Mammary epithelial cell (primary cell): ENCODE measurements at regions of chr14 and their contacts with region 1.

Region 1: GRCh38 chr14:54698966-54699530 is 132.1 kb downstream of the SAMD4A start:
- DNase-seq: no peak
- H3K4me3 ChIP-seq: no peak overlapping the region
- H3K27ac ChIP-seq: no peak overlapping the region
- H3K4me1 ChIP-seq: peaks cover 30% of the 10 kb centered on the region
- H3K27me3 ChIP-seq: no peaks in the 10 kb centered on the region
- CTCF ChIP-seq: no peak

Region 2: GRCh38 chr14:54411371-54411770 is 287.7 kb before region 1 on chr14:
- CTCF ChIA-PET with region 1: no interaction called
- dilution Hi-C with region 1: no loop called
- in situ Hi-C with region 1: no loop called
- intact Hi-C with region 1: no loop called
- DNase-seq: no peak
- H3K4me3 ChIP-seq: no peak overlapping the region
- H3K27ac ChIP-seq: no peak overlapping the region
- H3K4me1 ChIP-seq: no peaks in the 10 kb centered on the region
- H3K27me3 ChIP-seq: no peaks in the 10 kb centered on the region
- CTCF ChIP-seq: no peak

Region 3: DNA sequence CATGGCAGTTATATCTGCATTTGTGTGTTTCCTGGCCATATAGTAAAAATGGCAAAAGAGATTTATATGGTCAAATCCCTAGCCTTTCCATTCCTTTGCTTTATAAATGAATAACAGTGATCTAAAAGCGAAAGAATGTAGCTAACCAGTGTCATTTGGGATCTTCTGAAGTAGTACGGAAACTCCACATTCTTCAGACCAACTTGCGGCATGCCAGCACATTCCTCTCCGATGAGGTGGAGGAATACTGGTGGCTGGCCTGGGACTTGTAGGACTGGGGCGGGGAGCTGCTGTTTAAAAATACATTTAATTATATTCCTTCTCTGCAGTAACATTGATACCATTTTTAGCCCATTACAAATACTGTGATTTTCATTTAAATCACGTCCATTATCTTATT is 46.9 kb before region 1 on chr14:
- CTCF ChIA-PET with region 1: interaction called, 10 read pairs
- dilution Hi-C with region 1: no loop called
- in situ Hi-C with region 1: no loop called
- intact Hi-C with region 1: no loop called
- DNase-seq: peak; percentile 98
- H3K4me3 ChIP-seq: peak overlapping the region in 2 of 3 experiments; percentile 37 to 40
- H3K27ac ChIP-seq: peak overlapping the region; percentile 94
- H3K4me1 ChIP-seq: peaks cover 45% of the 10 kb centered on the region
- H3K27me3 ChIP-seq: no peaks in the 10 kb centered on the region
- CTCF ChIP-seq: no peak

Region 4: GRCh38 chr14:54756656-54757392 is 57.8 kb after region 1 on chr14:
- CTCF ChIA-PET with region 1: no interaction called
- dilution Hi-C with region 1: loop called (anchors 5 kb)
- in situ Hi-C with region 1: no loop called
- intact Hi-C with region 1: no loop called
- DNase-seq: no peak
- H3K4me3 ChIP-seq: no peak overlapping the region
- H3K27ac ChIP-seq: no peak overlapping the region
- H3K4me1 ChIP-seq: no peaks in the 10 kb centered on the region
- H3K27me3 ChIP-seq: no peaks in the 10 kb centered on the region
- CTCF ChIP-seq: no peak

Region 5: DNA sequence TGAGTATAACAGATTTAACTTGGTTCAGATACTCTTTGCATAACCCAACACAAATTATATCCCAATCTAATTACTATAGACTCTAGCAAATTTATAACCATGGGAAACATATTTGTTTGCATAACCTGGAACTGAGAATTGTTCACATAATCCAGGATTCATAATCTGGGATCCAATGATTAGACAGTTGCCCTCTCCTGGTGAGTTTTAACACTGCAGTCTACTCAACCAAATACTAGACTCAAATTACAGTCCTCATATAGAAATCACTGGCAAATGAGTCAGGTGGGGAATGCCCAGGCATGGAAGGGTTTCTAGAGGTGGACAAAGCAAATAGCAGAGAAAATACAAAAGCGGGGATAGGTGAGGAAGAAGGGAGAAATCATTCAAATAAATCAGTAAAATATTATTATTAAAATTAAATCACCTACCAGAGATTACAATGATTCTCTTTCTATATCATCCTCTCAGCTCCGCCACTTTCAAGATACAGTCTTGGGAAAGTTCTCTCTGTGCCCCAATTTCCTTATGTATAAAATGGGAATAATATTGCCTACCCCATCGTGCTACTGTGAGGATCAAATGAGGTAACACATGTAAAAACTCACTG is 194.2 kb after region 1 on chr14:
- CTCF ChIA-PET with region 1: no interaction called
- dilution Hi-C with region 1: no loop called
- in situ Hi-C with region 1: no loop called
- intact Hi-C with region 1: no loop called
- DNase-seq: peak; percentile 86
- H3K4me3 ChIP-seq: no peak overlapping the region
- H3K27ac ChIP-seq: peak overlapping the region; percentile 18
- H3K4me1 ChIP-seq: peaks cover 7% of the 10 kb centered on the region
- H3K27me3 ChIP-seq: no peaks in the 10 kb centered on the region
- CTCF ChIP-seq: peak; percentile 77 to 89

Region 6: DNA sequence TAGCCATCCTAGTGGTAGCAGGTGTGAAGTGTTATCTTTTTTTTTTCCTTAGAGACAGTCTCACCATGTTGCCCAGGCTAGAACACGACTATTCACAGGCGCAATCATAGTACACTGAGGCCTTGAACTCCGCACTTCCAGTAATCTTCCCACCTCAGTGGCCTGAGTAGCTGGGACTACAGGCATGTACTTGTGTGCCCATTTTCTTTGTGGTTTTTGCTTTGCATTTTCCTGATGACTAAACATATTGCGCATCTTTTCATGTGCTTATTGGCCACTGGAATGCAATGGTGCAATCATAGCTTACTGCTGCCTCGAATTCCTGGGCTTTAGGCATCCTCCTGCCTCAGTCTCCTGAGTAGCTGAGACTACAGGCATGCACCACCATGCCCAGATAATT is 236.9 kb after region 1 on chr14:
- CTCF ChIA-PET with region 1: no interaction called
- dilution Hi-C with region 1: no loop called
- in situ Hi-C with region 1: no loop called
- intact Hi-C with region 1: no loop called
- DNase-seq: peak; percentile 87
- H3K4me3 ChIP-seq: no peak overlapping the region
- H3K27ac ChIP-seq: no peak overlapping the region
- H3K4me1 ChIP-seq: peaks cover 10% of the 10 kb centered on the region
- H3K27me3 ChIP-seq: no peaks in the 10 kb centered on the region
- CTCF ChIP-seq: peak in 1 of 2 donors; percentile 3

Region 7: DNA sequence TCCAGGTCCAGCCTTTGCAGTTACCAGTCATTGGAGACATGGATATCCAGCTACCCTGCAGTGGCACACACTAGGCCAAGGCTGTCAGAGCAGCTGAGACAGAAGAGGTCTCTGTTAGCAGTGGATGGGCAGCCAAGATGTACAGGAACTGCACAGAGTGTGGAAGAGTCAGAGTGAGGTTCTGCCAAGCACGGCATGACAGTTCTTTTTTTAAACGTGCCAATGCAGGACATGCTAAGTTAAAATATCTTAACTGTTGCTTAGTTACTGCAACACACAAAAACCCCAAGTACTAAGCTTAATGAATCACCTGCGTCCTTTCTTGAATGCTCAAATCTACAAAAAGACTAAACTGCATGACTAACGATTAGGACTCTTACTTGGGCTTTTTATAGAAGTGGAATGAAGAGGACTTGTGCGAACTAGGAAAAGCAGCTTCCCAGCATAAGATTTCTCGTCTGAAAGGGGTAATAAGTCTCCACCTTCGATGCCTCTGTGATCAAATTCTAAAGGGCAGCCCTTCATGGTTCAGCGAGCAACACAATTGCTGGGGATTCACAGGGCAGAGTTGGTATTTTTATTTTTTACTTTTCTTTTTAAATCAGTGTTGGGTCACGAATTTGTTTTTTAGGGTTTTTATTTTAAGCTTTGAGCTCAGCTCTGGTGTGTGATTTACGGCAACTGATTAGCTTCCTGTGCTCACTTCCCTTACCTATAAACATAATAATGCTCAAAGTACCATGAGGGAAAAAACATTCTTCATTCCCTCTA is 373.0 kb after region 1 on chr14:
- CTCF ChIA-PET with region 1: no interaction called
- dilution Hi-C with region 1: no loop called
- in situ Hi-C with region 1: no loop called
- intact Hi-C with region 1: no loop called
- DNase-seq: peak; percentile 95
- H3K4me3 ChIP-seq: peak overlapping the region in 1 of 3 experiments; percentile 28
- H3K27ac ChIP-seq: peak overlapping the region; percentile 99
- H3K4me1 ChIP-seq: peaks cover 42% of the 10 kb centered on the region
- H3K27me3 ChIP-seq: no peaks in the 10 kb centered on the region
- CTCF ChIP-seq: no peak